Endothelial cell of umbilical vein (primary cell): ENCODE measurements at regions of chr2 and their contacts with region 1.

Region 1: DNA sequence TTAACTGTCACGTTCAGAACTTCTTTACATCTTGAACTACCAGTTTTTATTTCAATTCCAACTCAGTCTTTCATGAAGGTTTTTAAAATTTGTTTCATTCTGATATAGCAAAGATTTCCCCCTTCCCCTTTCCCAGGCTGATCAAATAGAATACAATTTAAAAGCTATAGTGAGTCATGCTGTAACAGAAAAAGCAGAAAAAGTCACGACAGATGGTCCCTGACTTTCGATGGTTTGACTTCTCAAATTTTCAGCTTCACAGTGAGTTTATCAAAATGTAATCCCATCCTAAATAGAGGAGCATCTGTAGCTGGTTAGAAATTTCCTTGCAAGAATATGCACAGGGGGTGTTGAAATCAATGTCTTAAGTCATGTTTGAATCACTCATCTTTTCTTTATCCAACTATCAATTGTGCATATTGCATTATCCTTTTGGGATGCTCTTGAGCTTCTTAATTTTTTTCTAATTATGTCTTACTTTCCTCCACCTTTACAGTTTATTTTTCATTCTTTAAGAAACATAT is 500.3 kb downstream of the LRP1B start:
- DNase-seq: no peak
- H3K4me3 ChIP-seq: no peak overlapping the region
- H3K27ac ChIP-seq: no peak overlapping the region
- H3K4me1 ChIP-seq: no peaks in the 10 kb centered on the region
- H3K27me3 ChIP-seq: no peaks in the 10 kb centered on the region
- CTCF ChIP-seq: no peak
- POLR2A ChIP-seq: no peak

Region 2: GRCh38 chr2:141618457-141618856 is 12.0 kb before region 1 on chr2:
- CTCF ChIA-PET with region 1: interaction called, 12 read pairs
- POLR2A ChIA-PET with region 1: no interaction called
- dilution Hi-C with region 1: no loop called
- intact Hi-C with region 1: no loop called
- DNase-seq: no peak
- H3K4me3 ChIP-seq: no peak overlapping the region
- H3K27ac ChIP-seq: no peak overlapping the region
- H3K4me1 ChIP-seq: no peaks in the 10 kb centered on the region
- H3K27me3 ChIP-seq: no peaks in the 10 kb centered on the region
- CTCF ChIP-seq: no peak
- POLR2A ChIP-seq: no peak